ENCODE measurements at regions of chr13 and their contacts with region 1.

Region 1: GRCh38 chr13:20924758-20925394 is 22.3 kb upstream of the XPO4 start:
- DNase-seq: peak; percentile 13 to 83 (median 67)
- ATAC-seq: peak in 1 of 4 experiments; percentile 61
- H3K4me3 ChIP-seq: no peak overlapping the region
- H3K4me3 Mint-ChIP-seq: no peak overlapping the region
- H3K27ac ChIP-seq: no peak overlapping the region
- H3K27ac Mint-ChIP-seq: no peak overlapping the region
- H3K4me1 ChIP-seq: no peaks in the 10 kb centered on the region
- H3K4me1 Mint-ChIP-seq: no peaks in the 10 kb centered on the region
- H3K27me3 ChIP-seq: peaks cover 0 to 2% of the 10 kb centered on the region in 2 experiments
- H3K27me3 Mint-ChIP-seq: no peaks in the 10 kb centered on the region

Region 2: DNA sequence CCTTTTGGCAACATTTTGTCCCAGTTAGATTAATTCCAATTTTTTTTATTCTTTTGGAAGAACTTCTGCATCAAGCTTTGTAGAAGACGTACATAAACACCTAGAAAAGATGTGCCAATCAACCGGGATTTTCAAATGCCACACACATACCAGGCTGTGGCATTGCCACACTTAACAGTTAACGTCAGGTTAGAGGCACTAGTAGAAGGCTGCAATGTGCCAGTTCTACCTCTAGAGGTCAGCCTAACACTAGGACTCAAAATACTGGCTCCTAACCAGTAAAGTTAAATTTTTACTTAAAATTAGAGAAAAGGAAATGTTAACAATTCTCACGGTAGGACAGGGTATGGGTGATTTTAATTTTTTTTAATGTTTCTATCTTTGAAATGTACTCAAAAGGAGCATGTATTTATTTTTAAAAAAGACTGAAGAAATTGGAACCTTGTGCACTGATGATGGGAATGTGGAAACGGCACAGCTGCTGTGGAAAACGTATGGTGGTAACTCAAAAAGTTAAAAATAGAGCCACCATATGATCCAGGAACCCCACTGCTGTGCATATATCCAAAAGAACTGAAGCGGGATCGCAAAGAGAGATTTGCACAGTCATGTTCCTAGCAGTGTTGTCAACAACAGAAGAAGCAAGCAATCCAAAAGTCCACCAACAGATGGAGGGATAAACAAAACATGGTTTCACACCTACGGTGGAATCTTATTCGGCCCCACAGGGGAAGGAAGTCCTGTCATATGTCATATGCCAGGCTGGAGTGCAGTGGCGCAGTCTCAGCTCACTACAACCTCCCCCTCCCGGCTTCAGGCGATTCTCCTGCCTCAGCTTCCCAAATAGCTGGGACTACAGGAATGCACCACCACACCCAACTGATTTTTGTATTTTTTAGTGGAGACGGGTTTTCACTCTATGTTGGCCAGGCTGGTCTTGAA is 429.5 kb before region 1 on chr13:
- CTCF ChIA-PET with region 1: interaction called, 3 to 11 read pairs
- POLR2A ChIA-PET with region 1: no interaction called
- DNase-seq: peak in 33 of 35 experiments; percentile 18 to 81 (median 51)
- ATAC-seq: peak; percentile 80 to 91 (median 85)
- H3K4me3 ChIP-seq: no peak overlapping the region
- H3K4me3 Mint-ChIP-seq: no peak overlapping the region
- H3K27ac ChIP-seq: no peak overlapping the region
- H3K27ac Mint-ChIP-seq: no peak overlapping the region
- H3K4me1 ChIP-seq: peaks cover 0 to 4% of the 10 kb centered on the region in 2 experiments
- H3K4me1 Mint-ChIP-seq: peaks cover 6 to 7% (median 7%) of the 10 kb centered on the region in 3 donors
- H3K27me3 ChIP-seq: no peaks in the 10 kb centered on the region
- H3K27me3 Mint-ChIP-seq: no peaks in the 10 kb centered on the region

Region 3: DNA sequence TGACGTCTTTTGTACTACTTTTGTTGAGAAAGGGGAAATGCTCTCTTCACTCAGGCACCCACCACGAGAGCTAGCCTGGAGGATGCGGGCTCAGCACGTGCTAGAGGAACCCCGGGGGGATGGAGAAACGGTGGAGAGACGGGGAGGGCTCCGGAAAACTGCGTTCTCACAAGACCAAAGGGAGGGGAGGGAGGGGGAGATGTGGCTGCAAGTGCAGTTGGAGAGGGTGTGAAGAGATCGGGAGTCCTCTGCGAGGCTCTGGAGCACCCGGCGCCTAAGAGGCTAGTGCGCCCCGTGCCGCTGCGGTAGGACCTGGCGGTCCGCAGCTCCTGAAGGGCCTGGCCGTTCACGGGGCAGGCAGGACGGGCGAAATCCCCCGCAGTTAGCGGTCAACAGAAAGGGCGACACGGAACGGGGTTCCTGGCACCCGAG is 21.1 kb after region 1 on chr13:
- CTCF ChIA-PET with region 1: no interaction called
- POLR2A ChIA-PET with region 1: no interaction called
- DNase-seq: peak in 13 of 35 experiments; percentile 1 to 34 (median 6)
- ATAC-seq: peak in 3 of 4 experiments; percentile 20 to 44 (median 37)
- H3K4me3 ChIP-seq: peak overlapping the region in 1 of 2 donors; percentile 44
- H3K4me3 Mint-ChIP-seq: peak overlapping the region in 1 of 3 donors; percentile 42
- H3K27ac ChIP-seq: no peak overlapping the region
- H3K27ac Mint-ChIP-seq: no peak overlapping the region
- H3K4me1 ChIP-seq: peaks cover 0 to 8% of the 10 kb centered on the region in 2 experiments
- H3K4me1 Mint-ChIP-seq: peaks cover 9% of the 10 kb centered on the region in 3 donors
- H3K27me3 ChIP-seq: peaks cover 0 to 35% of the 10 kb centered on the region in 2 experiments
- H3K27me3 Mint-ChIP-seq: peaks cover 48 to 57% of the 10 kb centered on the region in 2 donors

Measured in T-cell (primary cell).